ENCODE measurements at regions of chr1 and their contacts with region 1.

Region 1: DNA sequence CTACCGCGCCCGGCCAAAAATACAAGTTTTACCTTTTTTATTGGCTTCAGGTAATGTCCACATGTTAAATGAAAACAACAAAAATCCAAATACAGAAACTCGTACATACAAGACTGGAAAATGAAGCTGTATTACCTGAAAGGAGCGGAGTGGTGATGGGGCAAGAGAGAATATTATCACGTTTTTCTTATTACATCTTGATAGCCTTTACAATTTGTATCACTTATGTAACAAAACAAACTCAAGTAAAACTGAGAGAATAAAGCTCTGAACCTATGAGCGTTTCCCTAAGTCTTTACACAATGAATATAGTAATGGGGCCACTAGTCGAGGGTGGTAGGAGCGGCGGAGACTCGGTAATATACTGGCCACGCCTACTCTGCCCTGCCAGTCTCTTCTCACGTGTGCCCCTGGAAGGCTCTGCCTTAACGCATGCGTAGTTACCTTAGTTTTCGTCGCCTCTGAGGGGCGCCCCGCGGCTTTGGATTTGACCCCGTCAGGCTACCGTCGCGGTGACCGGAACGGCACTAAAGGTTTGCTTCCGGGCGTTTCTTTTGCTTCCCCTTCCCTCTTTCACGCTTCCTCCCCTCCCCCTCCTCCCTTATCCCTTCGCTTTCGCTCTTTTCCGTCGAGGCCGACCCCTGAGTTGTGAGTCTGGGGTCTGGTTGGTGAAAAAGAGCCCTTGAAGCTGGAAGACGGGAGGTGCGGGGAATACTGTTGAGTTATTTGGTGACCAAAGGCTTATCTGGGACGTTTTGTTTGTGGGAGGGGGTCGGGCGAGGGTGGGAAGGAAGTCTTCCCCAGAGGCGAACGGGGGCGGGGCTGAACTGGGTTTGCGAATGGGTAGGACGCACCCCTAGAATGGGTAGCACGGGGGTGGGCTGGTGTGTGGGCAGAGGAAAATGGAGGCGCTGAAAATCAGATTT is at the start of gene SETDB1:
- DNase-seq: peak; percentile 97
- H3K4me3 ChIP-seq: peak within 1 kb of the TSS; percentile 60
- H3K27ac ChIP-seq: peak within 1 kb of the TSS; percentile 74
- H3K4me1 ChIP-seq: no peaks in the 10 kb centered on the region
- H3K27me3 ChIP-seq: no peaks in the 10 kb centered on the region
- CTCF ChIP-seq: no peak
- total RNA-seq, gene SETDB1: 28.2 to 32.8 TPM

Region 2: DNA sequence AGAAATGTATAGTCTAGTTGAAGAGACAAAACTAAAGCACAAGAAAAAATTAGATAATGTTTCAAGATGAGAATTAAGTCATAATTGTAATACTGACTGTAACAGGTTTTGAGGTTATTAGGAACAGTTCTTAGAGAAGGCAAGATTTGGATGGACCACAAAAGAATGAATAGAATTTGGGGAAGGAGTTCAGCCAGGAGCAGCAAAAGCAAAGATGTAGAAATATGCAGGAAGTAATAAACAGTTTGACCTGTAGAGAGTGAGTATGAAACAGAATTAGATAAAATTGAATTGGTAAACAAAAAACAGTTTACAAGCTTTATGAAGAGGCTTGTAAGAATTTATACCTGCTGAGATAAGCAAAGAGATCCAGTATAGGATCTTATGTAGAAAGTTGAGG is 842.2 kb before region 1 on chr1:
- intact Hi-C with region 1: no loop called
- DNase-seq: no peak
- H3K4me3 ChIP-seq: no peak overlapping the region
- H3K27ac ChIP-seq: no peak overlapping the region
- H3K4me1 ChIP-seq: no peaks in the 10 kb centered on the region
- H3K27me3 ChIP-seq: no peaks in the 10 kb centered on the region
- CTCF ChIP-seq: no peak

Region 3: GRCh38 chr1:150561974-150562445 is 364.1 kb before region 1 on chr1:
- intact Hi-C with region 1: loop called (anchors 10 kb)
- DNase-seq: peak; percentile 96
- H3K4me3 ChIP-seq: peak overlapping the region; percentile 42
- H3K27ac ChIP-seq: peak overlapping the region; percentile 98
- H3K4me1 ChIP-seq: peaks cover 41% of the 10 kb centered on the region
- H3K27me3 ChIP-seq: no peaks in the 10 kb centered on the region
- CTCF ChIP-seq: no peak

Region 4: DNA sequence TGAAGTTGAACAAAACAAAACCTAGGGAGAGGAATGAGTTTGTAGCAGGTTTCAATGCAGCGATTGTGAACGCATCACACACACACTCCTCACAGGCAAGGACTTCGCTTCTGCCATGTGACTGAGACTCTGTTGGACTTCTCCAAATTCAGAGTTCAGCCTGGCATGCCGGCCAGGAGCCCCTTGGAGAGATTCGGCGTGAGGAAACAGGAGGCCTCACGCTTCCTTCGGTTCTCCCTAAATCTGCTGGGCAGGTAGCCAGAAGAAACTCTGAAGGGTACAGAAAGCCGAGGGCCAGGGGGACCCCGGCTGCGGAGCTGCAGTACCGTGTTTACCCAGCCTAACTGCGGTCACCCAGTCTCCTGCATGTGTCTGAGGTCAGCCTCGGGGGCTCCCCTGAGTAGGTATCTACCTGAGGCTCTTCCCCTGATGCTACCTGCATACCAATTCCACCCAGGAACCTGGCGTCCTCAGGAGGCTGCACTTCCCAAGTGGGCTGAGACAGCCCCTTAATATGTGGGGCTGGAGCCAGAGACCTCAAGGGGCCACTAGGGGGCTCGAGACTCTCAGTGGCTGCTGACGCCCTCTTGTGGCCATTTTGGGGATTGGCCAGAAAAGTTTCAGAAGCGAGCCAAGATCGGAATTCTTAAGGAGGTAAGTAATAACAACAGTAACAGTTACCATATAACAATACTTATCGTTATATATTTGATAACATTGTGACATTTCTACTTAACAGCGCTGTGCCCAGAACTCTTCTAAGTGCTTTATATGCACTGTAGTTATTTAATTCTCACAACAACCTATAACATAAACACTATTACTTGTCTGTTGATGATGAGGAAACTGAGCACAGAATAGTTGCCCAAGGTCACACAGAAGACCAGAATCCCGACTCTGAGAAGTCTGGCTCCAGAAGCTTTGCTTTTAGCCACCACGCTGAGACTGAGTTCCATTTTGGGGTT is 53.3 kb after region 1 on chr1:
- intact Hi-C with region 1: loop called (anchors 10 kb)
- DNase-seq: peak; percentile 92
- H3K4me3 ChIP-seq: no peak overlapping the region
- H3K27ac ChIP-seq: peak overlapping the region; percentile 2
- H3K4me1 ChIP-seq: peaks cover 15% of the 10 kb centered on the region
- H3K27me3 ChIP-seq: no peaks in the 10 kb centered on the region
- CTCF ChIP-seq: peak; percentile 100

Measured in colonic mucosa (tissue), 4 donors.